Gastrocnemius medialis (tissue), 4 donors: ENCODE measurements at regions of chr5 and their contacts with region 1.

Region 1: DNA sequence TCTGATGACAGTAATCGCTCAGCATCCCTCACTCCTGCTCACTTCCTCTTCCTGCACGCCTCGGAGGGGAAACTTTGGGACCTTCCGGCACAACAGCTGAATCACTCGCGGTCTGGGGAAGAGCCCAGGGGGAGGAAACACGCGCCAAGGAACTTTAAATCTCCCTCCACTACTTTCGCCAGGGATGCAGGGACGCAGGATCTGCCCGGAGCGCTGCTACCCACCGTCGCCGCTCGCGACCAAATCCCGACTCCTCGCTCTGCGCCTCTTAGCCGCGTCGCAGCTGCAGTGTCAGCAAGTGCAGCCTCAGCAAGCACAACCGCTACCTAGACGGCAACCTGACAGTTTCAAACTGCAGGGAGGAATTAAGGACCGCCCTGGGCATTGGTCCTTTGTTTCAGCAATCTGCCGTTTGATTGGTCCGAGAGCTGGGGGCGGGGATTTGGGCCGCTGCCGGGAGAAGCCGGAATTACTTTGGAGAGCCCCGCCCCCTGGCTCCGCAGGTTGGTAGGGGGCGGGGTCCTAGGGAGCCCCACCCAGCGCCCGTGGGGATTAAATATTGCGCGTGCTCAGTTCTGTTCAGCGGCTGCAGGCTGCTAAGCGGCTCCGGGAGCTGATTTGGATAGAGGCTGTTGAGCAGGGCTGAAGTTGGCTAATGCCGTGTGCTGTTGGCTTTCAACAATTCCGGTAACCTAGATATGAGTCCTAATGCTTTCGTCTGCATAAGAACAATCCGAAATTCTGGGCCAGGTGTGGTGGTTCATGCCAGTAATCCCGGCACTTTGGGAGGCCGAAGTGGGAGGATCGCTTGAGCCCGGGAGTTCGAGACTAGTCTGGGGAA is at the start of gene POC5:
- DNase-seq: peak; percentile 91 to 97
- ATAC-seq: peak; percentile 100
- H3K4me3 ChIP-seq: peak within 1 kb of the TSS; percentile 81 to 85 (median 84)
- H3K27ac ChIP-seq: peak within 1 kb of the TSS; percentile 82 to 88 (median 86)
- H3K4me1 ChIP-seq: peaks cover 5 to 11% of the 10 kb centered on the region in 2 donors
- H3K27me3 ChIP-seq: no peaks in the 10 kb centered on the region
- CTCF ChIP-seq: no peak
- POLR2A ChIP-seq: peak; percentile 61 to 64
- total RNA-seq, gene POC5: 4.1 to 7.3 (median 5.4) TPM

Region 2: DNA sequence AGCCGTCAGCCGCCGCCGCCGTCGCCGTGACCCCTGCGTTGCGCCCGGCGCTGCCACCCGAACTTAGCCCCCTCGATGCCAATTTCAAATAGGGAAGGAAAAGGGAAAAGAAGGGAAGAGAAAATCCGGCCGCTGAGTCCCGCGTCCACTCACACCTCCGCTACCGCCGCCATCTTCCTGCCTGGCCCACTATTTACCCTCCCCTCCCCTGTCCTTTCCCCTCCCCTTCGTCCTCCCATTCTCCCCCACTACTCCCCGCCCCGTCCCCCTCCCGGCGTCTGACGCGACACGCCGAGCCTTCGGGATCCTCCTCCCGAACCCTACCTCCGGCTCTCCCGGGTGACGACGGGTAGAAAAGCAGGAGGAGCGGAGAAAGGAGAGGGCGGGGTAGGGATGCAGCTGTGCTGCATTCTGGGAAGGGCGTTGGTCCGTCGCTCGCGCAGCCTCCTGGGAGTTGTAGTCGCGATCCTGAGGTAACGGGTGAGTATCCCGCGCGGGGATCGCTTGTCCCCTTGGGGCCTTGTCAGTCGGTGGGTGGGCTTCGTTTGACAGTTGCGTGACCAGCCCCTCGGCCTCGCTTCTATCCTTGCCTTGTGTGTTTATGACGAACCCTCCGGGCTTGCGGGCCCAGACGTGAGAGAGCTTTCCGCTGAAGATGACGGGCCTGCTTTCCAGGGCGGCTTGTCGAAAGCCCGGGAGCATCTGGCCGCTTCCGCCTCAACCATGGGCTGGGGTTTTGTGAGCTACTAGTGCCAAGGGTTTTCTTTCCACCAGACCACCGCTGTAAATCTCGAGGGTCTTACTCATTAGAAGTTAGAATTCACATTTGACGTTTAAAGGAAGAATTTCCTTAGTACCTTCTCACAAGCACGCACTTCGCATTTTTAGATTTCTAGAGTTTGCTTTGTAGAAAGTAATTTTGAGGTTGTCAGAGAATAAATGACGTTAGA is 205.6 kb before region 1 on chr5 and contains the starts of genes CERT1 and POLK:
- in situ Hi-C with region 1: no loop called
- intact Hi-C with region 1: loop called (anchors 1 kb)
- DNase-seq: peak; percentile 98
- ATAC-seq: peak; percentile 89 to 91
- H3K4me3 ChIP-seq: peak within 1 kb of the TSS; percentile 87 to 97 (median 94)
- H3K27ac ChIP-seq: peak within 1 kb of the TSS; percentile 92 to 99 (median 96)
- H3K4me1 ChIP-seq: peaks cover 46 to 49% of the 10 kb centered on the region in 2 donors
- H3K27me3 ChIP-seq: no peaks in the 10 kb centered on the region
- CTCF ChIP-seq: no peak
- POLR2A ChIP-seq: peak; percentile 84 to 90
- total RNA-seq, gene CERT1: 30.8 to 50.6 (median 41.9) TPM
- total RNA-seq, gene POLK: 23.9 to 35.8 (median 27.8) TPM